ENCODE measurements at regions of chr7 and their contacts with region 1.

Region 1: GRCh38 chr7:138429577-138430250 is 30.3 kb upstream of the TRIM24 start:
- DNase-seq: no peak
- H3K4me3 ChIP-seq: no peak overlapping the region
- H3K27ac ChIP-seq: no peak overlapping the region
- H3K4me1 ChIP-seq: no peaks in the 10 kb centered on the region
- H3K27me3 ChIP-seq: no peaks in the 10 kb centered on the region
- CTCF ChIP-seq: no peak

Region 2: GRCh38 chr7:138151731-138152577 is 277.8 kb before region 1 on chr7:
- intact Hi-C with region 1: no loop called
- DNase-seq: no peak
- H3K4me3 ChIP-seq: no peak overlapping the region
- H3K27ac ChIP-seq: no peak overlapping the region
- H3K4me1 ChIP-seq: no peaks in the 10 kb centered on the region
- H3K27me3 ChIP-seq: no peaks in the 10 kb centered on the region
- CTCF ChIP-seq: no peak

Region 3: DNA sequence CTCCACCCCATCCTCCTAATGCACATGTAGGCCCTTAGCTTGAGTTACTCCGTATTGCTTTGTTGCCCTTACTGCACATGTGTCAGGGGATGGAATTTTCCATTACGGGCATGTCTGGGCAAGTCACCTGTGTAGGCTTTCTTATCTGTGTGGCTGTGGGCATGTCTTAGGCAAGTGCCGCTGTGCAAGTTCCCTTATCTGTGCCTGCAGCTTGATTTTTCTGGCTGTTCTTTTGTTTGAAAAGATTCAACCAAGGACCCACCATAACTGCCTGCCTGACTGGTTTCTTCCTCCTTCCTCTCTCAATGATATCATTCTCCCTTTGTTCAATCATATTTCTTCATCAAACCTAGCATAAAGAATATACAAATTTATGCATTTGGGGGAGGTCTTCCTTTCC is 264.9 kb before region 1 on chr7:
- intact Hi-C with region 1: no loop called
- DNase-seq: no peak
- H3K4me3 ChIP-seq: no peak overlapping the region
- H3K27ac ChIP-seq: no peak overlapping the region
- H3K4me1 ChIP-seq: no peaks in the 10 kb centered on the region
- H3K27me3 ChIP-seq: no peaks in the 10 kb centered on the region
- CTCF ChIP-seq: no peak

Region 4: DNA sequence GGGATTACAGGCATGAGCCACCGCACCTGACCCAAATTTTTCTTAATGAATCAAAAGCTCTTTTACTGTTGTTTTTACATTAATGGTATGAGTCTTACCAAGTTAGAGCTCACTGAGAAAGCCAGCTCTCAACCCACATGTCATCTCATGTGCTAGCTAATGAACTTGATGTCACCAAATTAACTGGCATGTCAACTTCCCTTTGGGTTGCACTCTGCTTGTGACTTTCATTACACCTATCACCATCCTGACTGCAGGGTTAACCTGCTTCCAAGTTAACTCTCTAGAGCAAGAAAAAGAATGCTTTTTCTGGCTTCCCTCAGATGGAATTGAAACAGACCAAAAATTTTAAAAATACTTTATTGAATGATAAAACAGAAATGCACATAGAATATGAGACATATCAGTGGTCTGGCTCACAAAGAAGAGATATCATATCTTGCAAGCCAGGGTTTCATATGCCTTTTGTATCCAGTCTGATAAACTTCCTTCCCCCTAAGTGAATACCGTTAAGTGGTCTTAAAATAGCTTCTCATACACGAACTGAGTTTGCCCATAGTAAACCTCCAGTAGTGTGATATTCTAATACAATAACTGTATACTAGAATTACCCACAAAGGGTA is 12.5 kb before region 1 on chr7:
- intact Hi-C with region 1: no loop called
- DNase-seq: no peak
- H3K4me3 ChIP-seq: no peak overlapping the region
- H3K27ac ChIP-seq: no peak overlapping the region
- H3K4me1 ChIP-seq: no peaks in the 10 kb centered on the region
- H3K27me3 ChIP-seq: no peaks in the 10 kb centered on the region
- CTCF ChIP-seq: no peak

Region 5: GRCh38 chr7:138500892-138501291 is 71.2 kb after region 1 on chr7:
- intact Hi-C with region 1: loop called (anchors 10 kb)
- DNase-seq: no peak
- H3K4me3 ChIP-seq: no peak overlapping the region
- H3K27ac ChIP-seq: no peak overlapping the region
- H3K4me1 ChIP-seq: no peaks in the 10 kb centered on the region
- H3K27me3 ChIP-seq: no peaks in the 10 kb centered on the region
- CTCF ChIP-seq: no peak

Measured in ascending aorta (tissue), 2 donors.